ENCODE measurements at regions of chr11 and their contacts with region 1.

Region 1: GRCh38 chr11:5137014-5137413 is 1.1 kb downstream of the OR52A5 start:
- DNase-seq: no peak
- ATAC-seq: no peak
- H3K4me3 ChIP-seq: no peak overlapping the region
- H3K27ac ChIP-seq: no peak overlapping the region
- H3K4me1 ChIP-seq: no peaks in the 10 kb centered on the region
- H3K27me3 ChIP-seq: peaks cover 54% of the 10 kb centered on the region
- CTCF ChIP-seq: no peak
- POLR2A ChIP-seq: no peak
- RAD21 ChIP-seq: no peak

Region 2: DNA sequence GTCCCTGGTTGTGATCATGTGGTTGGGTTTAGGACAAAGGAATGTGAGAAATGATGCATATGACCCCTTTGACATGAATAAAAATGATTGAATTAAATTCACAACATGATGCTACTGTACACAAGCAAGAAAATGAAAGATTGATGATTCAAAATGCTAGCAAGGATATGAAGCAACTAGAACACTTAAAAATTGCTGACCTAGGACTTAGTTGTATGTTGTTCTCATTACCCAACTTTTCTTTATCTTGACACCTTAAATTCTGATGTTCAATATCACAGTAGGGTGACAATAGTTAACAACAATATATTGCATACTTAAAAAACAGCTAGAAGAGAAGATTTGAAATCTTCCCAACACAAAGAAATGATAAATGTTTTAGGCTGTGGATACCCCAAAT is 19.4 kb before region 1 on chr11:
- CTCF ChIA-PET with region 1: no interaction called
- POLR2A ChIA-PET with region 1: no interaction called
- RAD21 ChIA-PET with region 1: no interaction called
- intact Hi-C with region 1: loop called (anchors 1 kb)
- DNase-seq: no peak
- ATAC-seq: no peak
- H3K4me3 ChIP-seq: no peak overlapping the region
- H3K27ac ChIP-seq: no peak overlapping the region
- H3K4me1 ChIP-seq: no peaks in the 10 kb centered on the region
- H3K27me3 ChIP-seq: peaks cover 58% of the 10 kb centered on the region
- CTCF ChIP-seq: no peak
- POLR2A ChIP-seq: no peak
- RAD21 ChIP-seq: no peak